Activated T-helper 2 cell treated with anti-CD3 and anti-CD28 coated beads, Interferon-gamma antibody, Interleukin-2, Interleukin-4, amounts not matched to agents 10 μg/mL and 5 μg/mL and 100 μg/mL, durations not matched to agents 14 hours and 24 hours and 36 hours (primary cell): ENCODE measurements at regions of chr2 and their contacts with region 1.

Region 1: DNA sequence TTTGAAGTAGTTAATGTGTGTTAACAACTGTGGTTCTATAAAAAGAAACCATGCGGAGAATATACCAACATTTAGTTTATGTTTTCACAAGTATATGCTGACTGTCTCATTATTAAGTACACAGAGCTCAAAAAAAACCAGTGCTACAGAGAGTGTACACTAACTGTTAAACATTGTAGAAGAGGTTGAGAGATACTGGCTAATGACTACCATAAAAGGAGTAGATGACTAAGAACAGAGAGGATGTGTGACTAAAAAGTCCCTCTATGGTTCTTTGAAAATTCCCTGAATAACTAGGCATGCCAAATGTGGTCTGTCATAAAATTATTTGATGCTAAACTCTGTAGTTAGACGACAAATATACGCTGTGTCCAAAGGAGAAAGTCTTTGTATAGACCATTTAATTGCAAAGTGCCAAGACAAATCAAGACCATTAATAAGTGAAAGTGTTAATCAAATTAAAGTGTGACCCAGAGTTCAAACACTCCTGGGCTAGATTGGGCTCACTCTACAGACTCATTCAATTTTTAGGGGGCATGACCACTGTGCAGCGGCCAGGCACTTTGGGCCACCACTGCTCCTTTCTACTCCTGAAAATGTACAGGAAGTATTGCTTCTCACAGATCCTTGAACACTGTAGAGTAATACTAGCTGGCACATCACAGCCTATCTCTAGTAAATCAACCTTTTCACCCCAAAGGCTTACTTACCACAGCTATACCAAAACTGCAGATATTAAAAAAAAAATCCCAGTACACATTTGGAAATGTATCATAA is 45.1 kb upstream of the SERTAD2 start:
- DNase-seq: no peak
- H3K4me3 Mint-ChIP-seq: peak overlapping the region; percentile 2
- H3K27ac Mint-ChIP-seq: peak overlapping the region; percentile 84
- H3K4me1 Mint-ChIP-seq: peaks cover 59% of the 10 kb centered on the region
- H3K27me3 Mint-ChIP-seq: no peaks in the 10 kb centered on the region

Region 2: DNA sequence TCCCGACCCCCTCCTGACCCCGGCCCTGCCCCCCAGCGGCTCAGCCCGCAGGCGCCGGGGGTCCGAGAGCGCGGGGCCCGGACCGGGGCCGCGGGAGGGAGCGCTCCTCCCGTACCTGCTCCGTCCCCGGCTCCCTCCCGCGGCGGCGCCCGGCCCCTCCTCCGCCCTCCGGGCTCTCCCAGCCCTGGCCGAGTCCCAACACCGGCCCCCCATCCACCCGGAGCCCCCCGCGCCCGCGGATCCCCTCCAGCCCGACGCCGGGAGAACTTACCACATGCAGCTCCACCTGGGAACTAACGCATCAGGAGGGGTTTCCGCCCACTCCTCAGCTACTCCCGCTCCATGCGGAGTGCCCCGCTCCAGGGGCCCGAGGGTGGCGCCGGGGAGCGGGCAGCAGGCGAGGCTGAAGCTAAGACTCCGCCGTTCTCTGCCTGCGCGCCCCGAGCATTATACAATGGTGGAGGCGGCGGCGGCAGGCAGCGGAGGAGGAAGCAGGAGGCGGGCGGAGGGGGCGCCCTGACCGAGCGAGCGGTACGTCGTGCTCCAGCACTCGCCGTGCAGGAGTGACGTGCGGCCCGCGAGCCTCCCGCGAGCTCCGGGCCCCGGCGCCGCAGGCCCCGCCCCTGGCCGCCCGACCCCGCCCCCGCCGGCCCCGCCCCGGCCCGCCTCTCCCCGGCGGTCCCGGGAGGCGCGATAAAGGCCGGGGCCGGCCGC is 45.4 kb before region 1 on chr2 and contains the start of gene SERTAD2:
- intact Hi-C with region 1: loop called (anchors 1 kb)
- DNase-seq: peak; percentile 82
- H3K4me3 Mint-ChIP-seq: peak within 1 kb of the TSS; percentile 91
- H3K27ac Mint-ChIP-seq: peak within 1 kb of the TSS; percentile 90
- H3K4me1 Mint-ChIP-seq: peaks cover 63% of the 10 kb centered on the region
- H3K27me3 Mint-ChIP-seq: no peaks in the 10 kb centered on the region
- total RNA-seq, gene SERTAD2: 29.2 and 31.0 TPM in 2 replicates

Region 3: GRCh38 chr2:64730551-64731262 is 31.9 kb after region 1 on chr2:
- intact Hi-C with region 1: loop called (anchors 1 kb)
- DNase-seq: peak; percentile 31
- H3K4me3 Mint-ChIP-seq: peak overlapping the region; percentile 76
- H3K27ac Mint-ChIP-seq: peak overlapping the region; percentile 94
- H3K4me1 Mint-ChIP-seq: peaks cover 75% of the 10 kb centered on the region
- H3K27me3 Mint-ChIP-seq: no peaks in the 10 kb centered on the region

Region 4: DNA sequence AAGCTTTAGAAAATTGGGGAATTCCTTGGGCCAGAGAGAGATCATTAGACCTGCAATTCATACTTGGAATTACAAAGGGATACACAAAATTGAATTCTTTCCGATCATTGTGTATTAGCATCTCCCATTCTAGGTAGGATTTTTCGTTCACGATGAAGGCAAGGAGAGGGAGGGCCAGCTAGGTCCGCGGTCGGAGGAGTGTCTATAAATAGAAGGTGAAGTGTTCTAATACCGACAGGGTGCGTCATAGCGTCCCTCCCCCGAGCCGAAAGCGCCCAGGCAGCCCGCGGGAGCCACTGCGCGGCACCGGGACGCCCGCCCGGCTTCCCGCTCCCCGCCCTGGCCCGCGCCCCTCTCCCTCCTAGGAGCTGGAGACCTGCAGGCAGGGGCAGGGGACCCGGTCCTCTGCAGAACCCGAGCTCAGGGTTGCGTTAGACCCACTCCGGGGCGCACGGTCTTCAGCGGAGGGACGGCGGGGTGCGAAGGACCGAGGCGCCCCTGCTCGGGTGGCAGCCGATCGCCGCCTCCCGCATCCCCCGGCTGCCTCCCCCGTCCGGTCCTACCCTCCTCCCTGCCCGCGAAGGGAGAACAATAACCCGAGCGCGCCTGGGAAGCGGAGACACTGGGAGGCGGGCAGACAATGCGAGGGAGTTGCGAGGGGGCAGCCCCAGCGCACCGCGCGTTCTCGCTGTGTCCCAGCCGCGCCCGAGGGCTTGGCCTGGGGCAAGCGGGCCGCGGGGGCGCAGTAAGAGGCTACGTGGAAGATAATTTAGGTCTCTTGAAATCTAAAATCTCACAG is 69.0 kb after region 1 on chr2:
- intact Hi-C with region 1: loop called (anchors 1 kb)
- DNase-seq: peak; percentile 76
- H3K4me3 Mint-ChIP-seq: peak overlapping the region; percentile 87
- H3K27ac Mint-ChIP-seq: peak overlapping the region; percentile 96
- H3K4me1 Mint-ChIP-seq: peaks cover 50% of the 10 kb centered on the region
- H3K27me3 Mint-ChIP-seq: peaks cover 6% of the 10 kb centered on the region

Region 5: DNA sequence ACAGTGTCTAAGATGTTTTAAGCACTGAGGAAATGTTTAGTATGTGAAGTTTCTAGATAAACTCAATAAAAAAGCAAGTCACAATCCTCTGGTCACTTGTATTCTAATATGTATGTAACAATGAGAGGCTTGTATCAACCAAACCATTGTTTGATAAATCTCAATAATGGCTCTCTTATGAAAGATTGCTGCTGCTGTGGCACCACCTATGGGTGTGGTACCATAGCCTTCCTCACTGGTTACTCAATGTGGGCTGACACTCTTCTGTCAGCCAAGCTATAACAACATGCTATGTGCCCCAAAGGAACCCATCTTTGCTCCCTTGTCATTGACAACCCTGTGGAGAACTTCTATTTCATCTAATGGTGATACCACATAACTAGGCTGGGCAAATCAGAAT is 443.7 kb after region 1 on chr2:
- intact Hi-C with region 1: no loop called
- DNase-seq: no peak
- H3K4me3 Mint-ChIP-seq: no peak overlapping the region
- H3K27ac Mint-ChIP-seq: no peak overlapping the region
- H3K4me1 Mint-ChIP-seq: no peaks in the 10 kb centered on the region
- H3K27me3 Mint-ChIP-seq: peaks cover 21% of the 10 kb centered on the region